ENCODE measurements at regions of chr3 and their contacts with region 1.

Region 1: GRCh38 chr3:58857402-58857801 is 190.8 kb upstream of the FAM3D start:
- DNase-seq: no peak
- ATAC-seq: no peak
- H3K4me3 Mint-ChIP-seq: no peak overlapping the region
- H3K27ac Mint-ChIP-seq: no peak overlapping the region
- H3K4me1 Mint-ChIP-seq: peaks cover 26% of the 10 kb centered on the region
- H3K27me3 Mint-ChIP-seq: no peaks in the 10 kb centered on the region
- CTCF ChIP-seq: no peak

Region 2: DNA sequence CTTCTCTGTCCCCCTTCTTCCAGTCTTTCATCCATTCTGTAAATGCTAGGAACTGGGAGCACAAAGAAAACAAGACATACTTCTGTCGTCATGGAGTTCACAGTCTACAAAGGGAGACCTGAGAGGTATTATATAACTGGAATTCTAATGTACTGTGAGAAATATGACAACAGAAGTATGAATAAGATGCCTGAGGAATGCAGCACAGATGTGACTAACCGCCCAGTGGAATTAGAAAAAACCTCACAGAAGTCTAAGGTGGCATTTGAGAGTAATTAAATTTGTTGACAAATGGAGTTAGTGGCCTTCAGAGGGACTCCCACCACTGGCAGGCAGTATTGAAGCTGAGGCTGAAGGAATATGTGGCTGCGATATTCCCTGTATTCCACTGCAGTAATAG is 22.3 kb before region 1 on chr3:
- CTCF ChIA-PET with region 1: no interaction called
- POLR2A ChIA-PET with region 1: no interaction called
- intact Hi-C with region 1: no loop called
- DNase-seq: no peak
- ATAC-seq: no peak
- H3K4me3 Mint-ChIP-seq: no peak overlapping the region
- H3K27ac Mint-ChIP-seq: no peak overlapping the region
- H3K4me1 Mint-ChIP-seq: no peaks in the 10 kb centered on the region
- H3K27me3 Mint-ChIP-seq: no peaks in the 10 kb centered on the region
- CTCF ChIP-seq: no peak

Region 3: GRCh38 chr3:58874795-58875194 is 17.4 kb after region 1 on chr3:
- CTCF ChIA-PET with region 1: no interaction called
- POLR2A ChIA-PET with region 1: interaction called, 7 read pairs
- intact Hi-C with region 1: loop called (anchors 1 kb)
- DNase-seq: no peak
- ATAC-seq: peak; percentile 45
- H3K4me3 Mint-ChIP-seq: no peak overlapping the region
- H3K27ac Mint-ChIP-seq: no peak overlapping the region
- H3K4me1 Mint-ChIP-seq: peaks cover 9% of the 10 kb centered on the region
- H3K27me3 Mint-ChIP-seq: no peaks in the 10 kb centered on the region
- CTCF ChIP-seq: no peak

Region 4: DNA sequence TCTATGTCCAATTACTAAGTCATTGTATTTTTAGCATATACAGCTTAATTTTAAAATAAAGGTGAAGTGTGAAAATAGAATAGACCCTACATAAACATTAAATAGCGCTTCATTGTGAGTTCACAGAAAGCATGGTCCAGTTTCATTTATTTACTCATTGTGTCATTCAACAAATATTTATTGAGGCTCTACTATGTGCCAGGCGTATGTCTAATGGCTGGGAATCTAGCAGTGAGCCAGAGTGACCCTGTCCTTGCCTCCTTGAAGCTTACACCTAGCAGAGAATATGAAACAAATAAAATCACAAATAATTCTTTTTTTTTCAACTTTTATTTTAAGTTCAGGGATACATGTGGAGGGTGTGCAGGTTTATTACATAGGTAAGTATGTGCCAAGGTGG is 30.7 kb after region 1 on chr3:
- CTCF ChIA-PET with region 1: no interaction called
- POLR2A ChIA-PET with region 1: no interaction called
- intact Hi-C with region 1: no loop called
- DNase-seq: no peak
- ATAC-seq: no peak
- H3K4me3 Mint-ChIP-seq: no peak overlapping the region
- H3K27ac Mint-ChIP-seq: no peak overlapping the region
- H3K4me1 Mint-ChIP-seq: no peaks in the 10 kb centered on the region
- H3K27me3 Mint-ChIP-seq: no peaks in the 10 kb centered on the region
- CTCF ChIP-seq: no peak

Region 5: GRCh38 chr3:58924578-58924977 is 67.2 kb after region 1 on chr3:
- CTCF ChIA-PET with region 1: no interaction called
- POLR2A ChIA-PET with region 1: no interaction called
- intact Hi-C with region 1: no loop called
- DNase-seq: no peak
- ATAC-seq: no peak
- H3K4me3 Mint-ChIP-seq: no peak overlapping the region
- H3K27ac Mint-ChIP-seq: no peak overlapping the region
- H3K4me1 Mint-ChIP-seq: peaks cover 5% of the 10 kb centered on the region
- H3K27me3 Mint-ChIP-seq: no peaks in the 10 kb centered on the region
- CTCF ChIP-seq: no peak